Activated CD8-positive, alpha-beta T cell treated with anti-CD3 and anti-CD28 coated beads for 36 hours (primary cell): ENCODE measurements at regions of chr3 and their contacts with region 1.

Region 1: GRCh38 chr3:39501968-39502837 is 34.7 kb downstream of the MOBP start:
- DNase-seq: no peak
- ATAC-seq: no peak
- H3K4me3 Mint-ChIP-seq: no peak overlapping the region
- H3K27ac Mint-ChIP-seq: no peak overlapping the region
- H3K4me1 Mint-ChIP-seq: peaks cover 4% of the 10 kb centered on the region
- H3K27me3 Mint-ChIP-seq: peaks cover 37% of the 10 kb centered on the region
- CTCF ChIP-seq: no peak

Region 2: GRCh38 chr3:39414421-39414907 is 87.7 kb before region 1 on chr3:
- CTCF ChIA-PET with region 1: interaction called, 6 read pairs
- POLR2A ChIA-PET with region 1: interaction called, 3 read pairs
- intact Hi-C with region 1: loop called (anchors 5 kb)
- DNase-seq: peak; percentile 24
- ATAC-seq: peak; percentile 38
- H3K4me3 Mint-ChIP-seq: peak overlapping the region; percentile 7
- H3K27ac Mint-ChIP-seq: peak overlapping the region; percentile 65
- H3K4me1 Mint-ChIP-seq: peaks cover 27% of the 10 kb centered on the region
- H3K27me3 Mint-ChIP-seq: no peaks in the 10 kb centered on the region
- CTCF ChIP-seq: no peak

Region 3: DNA sequence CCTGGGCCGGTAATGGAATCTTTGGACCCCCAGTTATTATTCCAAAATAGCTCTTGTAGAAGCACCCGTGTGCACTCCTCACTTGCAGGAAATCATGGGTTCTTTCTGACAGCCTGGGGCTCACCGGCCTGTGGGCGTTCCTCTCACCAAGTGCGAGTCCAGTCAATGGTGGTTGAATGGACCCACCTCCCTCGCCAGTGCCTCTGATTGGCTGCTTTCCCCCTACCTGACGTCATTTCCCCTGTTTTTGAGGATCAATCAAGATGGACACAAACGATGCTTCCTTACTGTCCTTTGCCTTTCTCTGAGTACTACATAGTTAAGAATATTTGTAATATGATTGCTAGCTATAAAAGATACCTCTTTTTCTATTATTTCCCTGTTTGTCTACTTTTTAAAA is 16.7 kb before region 1 on chr3:
- CTCF ChIA-PET with region 1: interaction called, 12 read pairs
- POLR2A ChIA-PET with region 1: no interaction called
- intact Hi-C with region 1: no loop called
- DNase-seq: no peak
- ATAC-seq: no peak
- H3K4me3 Mint-ChIP-seq: no peak overlapping the region
- H3K27ac Mint-ChIP-seq: no peak overlapping the region
- H3K4me1 Mint-ChIP-seq: no peaks in the 10 kb centered on the region
- H3K27me3 Mint-ChIP-seq: peaks cover 7% of the 10 kb centered on the region
- CTCF ChIP-seq: no peak

Region 4: DNA sequence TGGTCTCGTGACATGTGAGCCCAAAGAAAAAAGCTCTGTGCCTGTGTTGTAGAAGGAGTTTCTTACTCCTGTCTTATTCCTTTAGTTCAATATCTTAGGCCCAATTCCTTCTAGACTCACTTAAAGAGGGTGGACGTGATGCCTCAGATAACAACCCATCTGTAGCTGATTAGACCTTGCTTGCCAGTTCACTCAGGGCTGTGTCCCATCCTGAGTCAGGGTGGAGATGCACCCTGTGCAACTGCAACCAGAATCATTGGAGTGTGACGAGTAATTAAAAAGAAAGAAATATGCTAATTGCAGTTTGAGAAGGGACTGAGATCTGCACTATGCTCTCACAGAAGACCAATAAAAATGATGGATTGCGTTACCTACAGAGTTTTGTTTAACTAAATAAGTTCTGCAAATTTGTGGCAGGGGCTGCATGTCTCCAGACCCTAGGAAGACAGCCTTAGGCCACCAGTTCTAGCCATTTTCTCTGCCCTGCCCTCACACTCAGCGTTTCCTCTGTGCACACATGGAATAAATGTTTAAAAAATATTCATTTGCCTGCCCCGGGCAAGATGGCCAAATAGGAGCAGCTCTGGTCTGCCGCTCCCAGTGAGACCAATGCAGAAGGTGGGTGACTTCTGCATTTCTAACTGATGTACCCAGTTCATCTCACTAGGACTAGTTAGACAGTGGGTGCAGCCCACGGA is 48.3 kb after region 1 on chr3:
- CTCF ChIA-PET with region 1: no interaction called
- POLR2A ChIA-PET with region 1: no interaction called
- intact Hi-C with region 1: no loop called
- DNase-seq: no peak
- ATAC-seq: no peak
- H3K4me3 Mint-ChIP-seq: no peak overlapping the region
- H3K27ac Mint-ChIP-seq: no peak overlapping the region
- H3K4me1 Mint-ChIP-seq: no peaks in the 10 kb centered on the region
- H3K27me3 Mint-ChIP-seq: peaks cover 10% of the 10 kb centered on the region
- CTCF ChIP-seq: no peak

Region 5: GRCh38 chr3:39651993-39652739 is 150.0 kb after region 1 on chr3:
- CTCF ChIA-PET with region 1: no interaction called
- POLR2A ChIA-PET with region 1: no interaction called
- intact Hi-C with region 1: no loop called
- DNase-seq: no peak
- ATAC-seq: no peak
- H3K4me3 Mint-ChIP-seq: no peak overlapping the region
- H3K27ac Mint-ChIP-seq: no peak overlapping the region
- H3K4me1 Mint-ChIP-seq: no peaks in the 10 kb centered on the region
- H3K27me3 Mint-ChIP-seq: peaks cover 1% of the 10 kb centered on the region
- CTCF ChIP-seq: no peak

Region 6: GRCh38 chr3:39783680-39784079 is 281.5 kb after region 1 on chr3:
- CTCF ChIA-PET with region 1: no interaction called
- POLR2A ChIA-PET with region 1: no interaction called
- intact Hi-C with region 1: no loop called
- DNase-seq: no peak
- ATAC-seq: no peak
- H3K4me3 Mint-ChIP-seq: no peak overlapping the region
- H3K27ac Mint-ChIP-seq: no peak overlapping the region
- H3K4me1 Mint-ChIP-seq: no peaks in the 10 kb centered on the region
- H3K27me3 Mint-ChIP-seq: peaks cover 8% of the 10 kb centered on the region
- CTCF ChIP-seq: no peak